Activated CD4-positive, alpha-beta memory T cell treated with anti-CD3 and anti-CD28 coated beads, Interleukin-2, amount 10 ng/mL, durations not matched to agents 7 days and 5 days (primary cell): ENCODE measurements at regions of chr22 and their contacts with region 1.

Region 1: DNA sequence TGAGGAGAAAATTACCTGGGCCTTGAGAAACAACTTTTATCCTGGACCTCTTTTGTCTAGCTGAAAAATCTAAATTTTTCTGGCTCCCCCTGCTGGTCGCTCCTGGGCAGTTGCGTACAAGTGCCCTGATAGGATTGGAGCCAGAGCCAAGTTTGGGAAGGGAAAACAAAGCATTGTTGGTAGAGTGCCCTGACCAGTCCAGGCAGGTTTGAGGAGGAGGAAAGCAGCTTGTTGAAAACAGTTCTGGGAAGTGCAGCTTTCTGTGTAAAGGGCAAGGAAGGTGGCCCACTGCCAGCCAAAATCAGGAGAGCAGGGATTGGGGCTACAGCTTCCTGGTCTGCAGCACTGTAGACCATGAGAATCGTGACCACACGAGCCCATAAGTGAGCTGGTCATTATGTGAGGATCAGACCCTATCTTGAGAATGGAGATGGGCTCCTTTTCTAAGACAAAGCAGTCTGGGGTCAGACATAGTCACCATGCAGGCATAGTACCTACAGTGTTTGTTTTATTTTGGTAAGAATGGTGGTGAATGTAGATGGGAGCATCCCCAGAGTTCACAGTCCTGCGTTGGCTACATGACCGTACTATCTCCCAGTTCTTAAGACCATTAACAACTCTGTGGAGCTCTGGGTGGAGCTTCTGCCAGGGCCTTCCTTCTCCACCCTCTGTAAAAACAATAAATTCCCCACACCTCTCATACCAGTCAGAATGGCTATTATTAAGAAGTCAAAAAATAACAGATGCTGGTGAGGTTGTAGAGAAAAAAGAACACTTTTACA is 21.3 kb upstream of the PIK3IP1 start:
- DNase-seq: peak; percentile 69
- H3K4me3 Mint-ChIP-seq: no peak overlapping the region
- H3K27ac Mint-ChIP-seq: no peak overlapping the region
- H3K4me1 Mint-ChIP-seq: peaks cover 11% of the 10 kb centered on the region
- H3K27me3 Mint-ChIP-seq: no peaks in the 10 kb centered on the region

Region 2: GRCh38 chr22:31150615-31151014 is 162.9 kb before region 1 on chr22:
- CTCF ChIA-PET with region 1: no interaction called
- POLR2A ChIA-PET with region 1: no interaction called
- DNase-seq: no peak
- H3K4me3 Mint-ChIP-seq: no peak overlapping the region
- H3K27ac Mint-ChIP-seq: no peak overlapping the region
- H3K4me1 Mint-ChIP-seq: no peaks in the 10 kb centered on the region
- H3K27me3 Mint-ChIP-seq: peaks cover 6% of the 10 kb centered on the region

Region 3: GRCh38 chr22:31262312-31263080 is 51.1 kb before region 1 on chr22:
- CTCF ChIA-PET with region 1: no interaction called
- POLR2A ChIA-PET with region 1: no interaction called
- DNase-seq: no peak
- H3K4me3 Mint-ChIP-seq: no peak overlapping the region
- H3K27ac Mint-ChIP-seq: no peak overlapping the region
- H3K4me1 Mint-ChIP-seq: no peaks in the 10 kb centered on the region
- H3K27me3 Mint-ChIP-seq: no peaks in the 10 kb centered on the region

Region 4: DNA sequence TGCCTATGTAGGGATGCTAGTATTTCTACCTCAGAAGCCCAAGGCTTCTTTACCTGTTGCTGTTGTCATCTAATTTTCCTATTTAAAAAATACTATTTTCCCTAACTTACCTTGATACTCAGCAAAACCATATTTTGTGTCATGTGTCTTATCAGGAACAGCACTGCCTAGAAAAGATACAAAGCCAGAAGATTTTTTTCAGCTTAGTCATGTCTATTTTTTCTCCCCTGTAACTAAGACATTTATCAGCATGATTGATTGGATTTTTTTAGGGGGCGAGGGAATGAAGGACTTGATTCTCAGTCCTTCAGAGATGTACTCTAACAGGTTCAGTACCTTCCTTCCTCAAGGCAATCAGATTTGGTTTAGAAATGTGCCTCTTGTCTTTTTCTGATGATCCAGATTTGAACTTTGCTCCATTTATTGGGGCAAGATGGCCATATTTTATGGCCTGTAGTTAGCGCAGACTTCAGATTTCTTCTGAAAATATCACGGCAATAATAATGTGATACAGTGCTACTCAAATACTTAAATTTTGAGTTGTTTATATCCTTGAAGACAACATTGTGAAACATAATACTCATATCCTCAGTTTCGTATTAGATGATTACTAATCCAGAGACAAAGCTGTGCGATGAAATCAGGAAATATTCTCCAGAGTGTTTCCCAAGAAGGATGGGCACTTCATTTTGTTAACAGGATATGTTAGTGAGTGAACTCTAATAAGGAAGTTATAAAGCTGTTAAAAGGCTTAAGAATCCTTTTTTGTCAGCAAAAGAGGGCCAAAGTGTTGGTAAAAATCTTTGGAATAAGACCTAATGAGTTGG is 17.5 kb before region 1 on chr22:
- CTCF ChIA-PET with region 1: interaction called, 26 read pairs
- POLR2A ChIA-PET with region 1: interaction called, 49 read pairs
- DNase-seq: no peak
- H3K4me3 Mint-ChIP-seq: no peak overlapping the region
- H3K27ac Mint-ChIP-seq: peak overlapping the region; percentile 4
- H3K4me1 Mint-ChIP-seq: peaks cover 39% of the 10 kb centered on the region
- H3K27me3 Mint-ChIP-seq: no peaks in the 10 kb centered on the region

Region 5: DNA sequence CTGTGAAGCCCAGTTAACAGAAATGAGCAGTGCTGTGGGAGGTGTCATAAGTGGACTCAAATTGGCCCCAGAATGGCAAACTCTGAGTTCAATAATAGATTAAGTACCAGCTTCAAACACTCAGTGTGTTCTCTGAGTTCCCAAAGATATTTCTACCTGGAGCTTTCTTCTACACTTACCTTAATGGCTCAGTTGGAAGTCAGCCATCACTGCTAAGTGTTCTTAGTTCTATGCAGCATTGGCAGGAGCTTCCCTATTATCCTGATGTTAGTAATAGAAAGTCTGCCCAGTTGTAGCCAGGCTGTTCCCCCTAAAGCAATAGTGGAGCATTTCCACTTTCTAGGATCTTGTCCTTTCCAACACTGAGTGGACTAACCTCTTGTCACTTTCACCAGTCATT is 11.6 kb before region 1 on chr22:
- CTCF ChIA-PET with region 1: interaction called, 21 read pairs
- POLR2A ChIA-PET with region 1: interaction called, 5 read pairs
- DNase-seq: no peak
- H3K4me3 Mint-ChIP-seq: no peak overlapping the region
- H3K27ac Mint-ChIP-seq: no peak overlapping the region
- H3K4me1 Mint-ChIP-seq: peaks cover 12% of the 10 kb centered on the region
- H3K27me3 Mint-ChIP-seq: no peaks in the 10 kb centered on the region

Region 6: GRCh38 chr22:31327883-31328696 is 14.5 kb after region 1 on chr22:
- CTCF ChIA-PET with region 1: interaction called, 26 read pairs
- POLR2A ChIA-PET with region 1: no interaction called
- DNase-seq: no peak
- H3K4me3 Mint-ChIP-seq: no peak overlapping the region
- H3K27ac Mint-ChIP-seq: no peak overlapping the region
- H3K4me1 Mint-ChIP-seq: peaks cover 18% of the 10 kb centered on the region
- H3K27me3 Mint-ChIP-seq: no peaks in the 10 kb centered on the region